Left ventricle myocardium inferior (tissue), 1 donor: ENCODE measurements at regions of chr9 and their contacts with region 1.

Region 1: GRCh38 chr9:98263482-98264357 is 8.3 kb upstream of the TBC1D2 start:
- DNase-seq: peak; percentile 77
- H3K4me3 ChIP-seq: no peak overlapping the region
- H3K27ac ChIP-seq: no peak overlapping the region
- H3K4me1 ChIP-seq: no peaks in the 10 kb centered on the region
- H3K27me3 ChIP-seq: peaks cover 11% of the 10 kb centered on the region
- CTCF ChIP-seq: peak; percentile 94

Region 2: DNA sequence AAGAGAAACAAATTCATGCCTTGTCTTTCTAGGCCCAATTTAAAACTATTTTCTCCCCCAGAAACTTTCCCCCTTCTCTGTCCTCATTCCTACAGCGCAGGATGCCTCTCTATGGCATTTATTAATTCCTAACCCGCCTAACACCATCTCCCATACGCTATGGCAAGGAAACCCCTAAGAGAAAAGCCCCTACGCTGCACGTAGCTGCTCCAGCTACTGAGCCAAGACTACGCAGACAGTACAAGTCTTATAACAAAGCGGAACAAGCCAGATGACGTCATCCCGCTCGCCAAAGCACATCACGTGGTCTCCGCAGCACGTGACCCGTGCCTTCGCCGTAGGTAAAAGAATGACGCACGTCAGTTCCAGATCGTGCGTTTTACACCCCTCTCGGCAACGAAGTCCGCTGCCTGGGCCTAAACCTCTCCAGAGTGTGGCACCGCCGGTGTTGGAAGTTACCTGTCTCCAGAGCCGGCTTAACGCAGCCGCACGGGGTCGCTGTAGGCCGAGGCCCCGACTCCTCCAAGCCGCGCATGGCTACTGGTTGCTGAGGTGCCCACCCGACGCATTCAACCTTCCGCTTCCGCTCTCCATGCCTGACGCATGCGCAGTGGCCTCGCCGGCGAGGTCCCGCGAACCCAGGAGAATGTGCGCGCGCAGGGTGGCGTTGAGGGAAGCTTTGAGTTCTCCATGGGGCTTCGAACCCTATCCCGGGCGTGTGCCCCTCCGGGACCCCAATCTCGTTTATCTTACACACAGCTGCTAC is 341.6 kb before region 1 on chr9 and contains the start of gene TRMO:
- intact Hi-C with region 1: loop called (anchors 2 kb)
- DNase-seq: peak; percentile 97
- H3K4me3 ChIP-seq: peak within 1 kb of the TSS; percentile 75
- H3K27ac ChIP-seq: peak within 1 kb of the TSS; percentile 99
- H3K4me1 ChIP-seq: peaks cover 38% of the 10 kb centered on the region
- H3K27me3 ChIP-seq: peaks cover 14% of the 10 kb centered on the region
- CTCF ChIP-seq: peak; percentile 75
- total RNA-seq, gene TRMO: 8.2 TPM

Region 3: DNA sequence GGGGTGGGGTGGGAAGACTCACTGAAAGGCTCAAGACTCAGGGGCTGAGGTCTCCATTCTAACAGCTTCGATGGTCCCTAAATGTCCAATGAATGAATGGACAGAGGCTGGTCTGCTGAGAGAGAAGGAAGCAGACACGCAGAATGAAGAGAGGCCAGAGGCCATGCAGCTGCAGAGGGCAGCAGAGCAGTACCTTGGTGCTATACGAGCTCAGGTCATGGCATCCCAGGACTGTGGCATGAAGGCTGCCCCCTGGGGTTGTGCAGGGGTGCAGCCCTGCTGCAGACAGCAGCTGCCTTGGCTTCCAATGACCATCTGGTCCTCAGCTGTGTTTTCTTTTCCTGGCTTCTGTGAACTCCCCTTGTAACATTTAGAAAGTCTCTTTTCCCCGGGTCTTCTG is 56.1 kb before region 1 on chr9:
- intact Hi-C with region 1: loop called (anchors 5 kb)
- DNase-seq: no peak
- H3K4me3 ChIP-seq: no peak overlapping the region
- H3K27ac ChIP-seq: no peak overlapping the region
- H3K4me1 ChIP-seq: peaks cover 3% of the 10 kb centered on the region
- H3K27me3 ChIP-seq: no peaks in the 10 kb centered on the region
- CTCF ChIP-seq: no peak